ENCODE measurements at regions of chr17 and their contacts with region 1.

Region 1: GRCh38 chr17:28684963-28685362 is 23.0 kb downstream of the SUPT6H start:
- DNase-seq: peak; percentile 66
- H3K4me3 ChIP-seq: no peak overlapping the region
- H3K27ac ChIP-seq: no peak overlapping the region
- H3K4me1 ChIP-seq: no peaks in the 10 kb centered on the region
- H3K27me3 ChIP-seq: no peaks in the 10 kb centered on the region
- CTCF ChIP-seq: peak in 3 of 4 experiments; percentile 18 to 38 (median 23)
- POLR2A ChIP-seq: no peak

Region 2: DNA sequence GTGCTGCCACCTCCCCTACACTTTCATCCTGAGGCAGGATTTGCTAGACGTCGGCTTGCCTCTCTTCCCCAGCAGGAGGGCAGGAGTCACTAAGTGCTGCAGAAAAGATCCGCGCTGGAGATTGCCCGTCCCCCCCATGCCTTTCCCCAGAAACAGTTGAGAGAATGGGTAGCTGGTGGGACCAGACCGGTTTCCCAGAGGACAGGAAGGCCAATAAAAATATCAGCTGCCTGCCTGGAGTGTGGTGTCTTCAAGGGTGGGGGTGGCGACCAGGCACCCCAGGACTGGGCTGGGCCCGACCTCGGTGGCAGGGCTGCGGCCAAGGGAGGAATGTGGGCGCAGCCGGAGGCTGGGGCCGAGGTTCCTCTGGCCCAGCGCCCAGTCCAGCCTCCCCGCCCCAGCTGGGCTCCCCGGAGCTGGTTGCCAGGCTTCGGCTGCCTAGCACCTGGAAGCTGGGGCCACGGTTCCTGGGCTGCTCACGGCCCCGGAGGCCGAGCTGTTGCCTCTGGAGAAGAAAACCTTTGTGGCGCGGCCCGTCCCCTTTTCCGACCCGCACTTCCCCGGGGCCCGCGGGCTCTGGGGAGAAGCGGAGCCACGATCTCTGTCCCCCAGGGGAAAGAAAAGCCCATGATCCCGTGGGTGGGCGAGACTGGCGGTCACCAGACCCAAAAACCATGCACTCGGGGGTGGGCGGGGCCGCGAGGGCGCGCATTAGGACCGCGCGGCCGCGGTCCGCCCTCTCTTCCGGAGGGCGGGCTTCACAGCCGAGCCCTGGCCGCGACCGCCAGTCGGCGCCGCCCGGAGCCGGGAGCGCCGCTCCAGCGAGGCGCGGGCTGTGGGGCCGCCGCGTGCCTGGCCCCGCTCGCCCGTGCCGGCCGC is 58.5 kb after region 1 on chr17 and contains the start of gene TRAF4:
- intact Hi-C with region 1: loop called (anchors 10 kb)
- DNase-seq: peak; percentile 73
- H3K4me3 ChIP-seq: peak within 1 kb of the TSS; percentile 93 to 99
- H3K27ac ChIP-seq: peak within 1 kb of the TSS; percentile 99
- H3K4me1 ChIP-seq: peaks cover 31% of the 10 kb centered on the region
- H3K27me3 ChIP-seq: no peaks in the 10 kb centered on the region
- CTCF ChIP-seq: peak in 3 of 4 experiments; percentile 19 to 65 (median 62)
- POLR2A ChIP-seq: peak; percentile 83
- total RNA-seq, gene TRAF4: 43.1 to 59.8 TPM

Region 3: GRCh38 chr17:28878981-28879380 is 194.0 kb after region 1 on chr17:
- intact Hi-C with region 1: no loop called
- DNase-seq: no peak
- H3K4me3 ChIP-seq: no peak overlapping the region
- H3K27ac ChIP-seq: no peak overlapping the region
- H3K4me1 ChIP-seq: no peaks in the 10 kb centered on the region
- H3K27me3 ChIP-seq: no peaks in the 10 kb centered on the region
- CTCF ChIP-seq: peak in 2 of 4 experiments; percentile 26 to 38
- POLR2A ChIP-seq: no peak

Measured in prostate gland (tissue), 2 donors.